H1 (cell line): ENCODE measurements at regions of chr11 and their contacts with region 1.

Region 1: DNA sequence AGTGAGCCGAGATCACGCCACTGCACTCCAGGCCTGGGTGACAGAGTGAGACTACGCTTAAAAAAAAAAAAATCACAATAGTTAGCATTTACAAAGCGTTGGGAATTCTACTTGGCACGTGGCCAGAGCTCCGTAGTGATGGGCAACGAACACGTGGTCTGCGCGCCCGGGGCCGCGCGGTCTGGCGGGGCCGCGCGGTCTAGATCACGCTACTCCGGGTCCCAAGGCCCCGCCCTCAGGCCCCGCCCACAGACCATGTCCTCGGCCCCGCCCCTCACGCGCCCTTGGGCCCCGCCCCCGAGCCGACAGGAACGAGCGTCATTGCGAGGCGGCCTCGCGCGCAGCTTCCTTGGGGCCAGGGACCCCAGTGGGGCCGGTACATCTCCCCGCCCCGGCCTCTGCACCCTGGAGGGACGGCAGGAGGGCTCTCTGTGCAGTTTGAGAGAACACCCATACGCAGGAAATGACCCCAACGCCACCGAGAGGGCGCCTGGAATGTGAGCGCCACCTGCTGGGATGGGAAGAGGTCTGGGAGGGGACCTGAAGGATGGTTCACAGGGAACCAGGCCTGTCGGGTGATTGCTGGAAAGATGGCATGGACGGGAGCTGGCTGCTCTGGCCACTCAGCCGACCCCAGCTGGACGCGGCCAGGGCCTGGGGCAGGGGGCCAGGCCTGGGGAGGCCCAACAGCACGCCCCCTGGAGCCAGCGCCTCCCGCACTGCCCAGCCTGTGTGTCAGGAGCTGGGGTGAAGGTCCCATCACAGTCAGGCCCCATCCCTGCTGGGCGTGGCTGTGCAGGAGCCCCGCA is 2.0 kb upstream of the PTDSS2 start:
- DNase-seq: peak; percentile 69 to 99
- H3K4me3 ChIP-seq: peak overlapping the region; percentile 31 to 89 (median 76)
- H3K27ac ChIP-seq: peak overlapping the region; percentile 79; the same call in 1 of the 2 replicates
- H3K4me1 ChIP-seq: peaks cover 0 to 12% (median 5%) of the 10 kb centered on the region in 4 experiments; a peak in 5 of 7 replicates
- H3K27me3 ChIP-seq: no peaks in the 10 kb centered on the region
- CTCF ChIP-seq: peak in 2 of 3 experiments; percentile 62 to 80; a peak in 3 of 4 replicates
- EP300 ChIP-seq: no peak
- POLR2A ChIP-seq: peak in 1 of 2 experiments; percentile 57; a peak in 2 of 3 replicates
- RAD21 ChIP-seq: peak; percentile 60 to 69

Region 2: DNA sequence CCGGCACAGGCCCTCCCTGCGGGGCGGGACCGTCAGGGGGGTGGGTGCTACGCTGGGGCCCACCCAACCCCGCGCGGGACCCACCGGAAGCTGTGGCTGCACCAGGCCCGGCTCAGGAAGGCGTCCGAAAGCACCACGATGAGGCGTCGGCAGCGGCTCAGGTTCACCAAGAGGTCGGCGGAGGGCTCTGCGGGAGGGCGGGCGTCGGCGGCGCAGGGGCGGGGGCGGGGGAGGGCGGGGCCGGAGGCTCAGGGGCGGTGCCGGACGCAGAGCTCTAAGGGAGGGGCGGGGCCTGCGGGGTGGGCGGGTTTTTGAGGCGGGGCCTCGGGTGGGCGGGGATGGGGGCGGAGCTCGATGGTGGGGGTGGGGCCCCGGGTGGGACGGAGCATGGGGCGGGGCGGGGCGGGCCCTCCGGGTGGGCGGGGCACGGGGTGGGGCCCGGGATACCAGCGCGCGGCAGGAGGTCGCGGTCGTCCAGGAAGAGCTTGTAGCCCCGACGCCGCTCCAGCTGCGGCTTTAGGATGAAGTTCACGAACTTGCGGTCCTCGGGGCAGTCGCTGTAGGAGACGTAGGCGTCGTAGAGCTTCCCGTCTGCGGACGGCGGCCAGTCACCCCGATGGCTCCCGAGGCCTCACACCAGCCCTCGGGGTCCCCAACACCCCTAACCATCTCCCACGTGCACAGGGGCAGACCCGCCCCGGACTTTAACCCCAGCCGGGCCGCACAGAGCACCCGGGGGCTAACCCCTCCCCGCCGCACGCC is 41.0 kb before region 1 on chr11:
- CTCF ChIA-PET with region 1: interaction called, 24 read pairs
- POLR2A ChIA-PET with region 1: interaction called, 30 read pairs
- DNase-seq: peak; percentile 57 to 88
- H3K4me3 ChIP-seq: peak overlapping the region; percentile 8 to 65 (median 29); a peak in 6 of 8 replicates
- H3K27ac ChIP-seq: no peak overlapping the region
- H3K4me1 ChIP-seq: peaks cover 0 to 11% (median 6%) of the 10 kb centered on the region in 4 experiments; a peak in 4 of 7 replicates
- H3K27me3 ChIP-seq: peaks cover 0 to 5% (median 0%) of the 10 kb centered on the region in 4 experiments; a peak in 2 of 7 replicates
- CTCF ChIP-seq: no peak
- EP300 ChIP-seq: no peak
- POLR2A ChIP-seq: no peak
- RAD21 ChIP-seq: no peak

Region 3: GRCh38 chr11:460331-461199 is 12.4 kb after region 1 on chr11:
- CTCF ChIA-PET with region 1: interaction called, 12 read pairs
- POLR2A ChIA-PET with region 1: interaction called, 19 read pairs
- DNase-seq: no peak
- H3K4me3 ChIP-seq: no peak overlapping the region
- H3K27ac ChIP-seq: no peak overlapping the region
- H3K4me1 ChIP-seq: peaks cover 0 to 17% (median 3%) of the 10 kb centered on the region in 4 experiments; a peak in 5 of 7 replicates
- H3K27me3 ChIP-seq: no peaks in the 10 kb centered on the region
- CTCF ChIP-seq: no peak
- EP300 ChIP-seq: no peak
- POLR2A ChIP-seq: no peak
- RAD21 ChIP-seq: no peak

Region 4: DNA sequence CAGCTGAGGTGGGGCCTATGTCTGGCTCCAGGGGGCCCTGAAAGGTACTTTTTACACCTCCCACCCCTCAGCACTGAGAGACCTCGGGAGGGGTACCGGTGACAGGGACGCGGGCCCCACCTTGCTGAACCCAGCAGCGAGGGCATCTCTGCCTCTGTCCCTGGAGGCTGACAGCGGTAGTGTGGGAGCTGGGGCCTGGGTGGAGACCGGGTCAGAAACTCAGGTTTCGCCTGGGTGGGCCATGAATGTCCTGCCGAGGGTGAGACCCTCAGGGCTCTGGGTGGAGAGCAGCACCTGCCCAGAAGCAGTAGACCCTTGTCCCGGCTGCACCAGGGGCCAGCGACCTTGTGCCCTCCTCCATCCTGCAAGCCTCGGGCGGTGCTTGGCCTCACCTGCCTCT is 24.1 kb after region 1 on chr11:
- CTCF ChIA-PET with region 1: interaction called, 32 read pairs
- POLR2A ChIA-PET with region 1: interaction called, 19 read pairs
- DNase-seq: peak in 1 of 2 experiments; percentile 49
- H3K4me3 ChIP-seq: no peak overlapping the region
- H3K27ac ChIP-seq: no peak overlapping the region
- H3K4me1 ChIP-seq: peaks cover 0 to 10% (median 6%) of the 10 kb centered on the region in 4 experiments; a peak in 6 of 7 replicates
- H3K27me3 ChIP-seq: no peaks in the 10 kb centered on the region
- CTCF ChIP-seq: peak in 1 of 3 experiments; percentile 52; a peak in 2 of 4 replicates
- EP300 ChIP-seq: no peak
- POLR2A ChIP-seq: no peak
- RAD21 ChIP-seq: no peak; a peak in 1 of 4 replicates

Region 5: GRCh38 chr11:518463-519250 is 70.5 kb after region 1 on chr11:
- CTCF ChIA-PET with region 1: interaction called, 14 read pairs
- POLR2A ChIA-PET with region 1: no interaction called
- DNase-seq: peak; percentile 51 to 93
- H3K4me3 ChIP-seq: peak overlapping the region in 1 of 4 experiments; percentile 45; a peak in 2 of 8 replicates
- H3K27ac ChIP-seq: no peak overlapping the region
- H3K4me1 ChIP-seq: no peaks in the 10 kb centered on the region
- H3K27me3 ChIP-seq: 0 out of 7 replicates have a peak, but pooled peaks cover 0 to 3% (median 0%) of the 10 kb centered on the region in 4 experiments
- CTCF ChIP-seq: peak; percentile 82 to 100 (median 94)
- EP300 ChIP-seq: 0 out of 3 replicates have a peak, but pooled peaks of 1 of the 2 experiments have one; percentile 69
- POLR2A ChIP-seq: no peak
- RAD21 ChIP-seq: peak; percentile 67 to 91